ENCODE measurements at regions of chr7 and their contacts with region 1.

Region 1: GRCh38 chr7:95690367-95690947 is 81.9 kb upstream of the DYNC1I1 start:
- DNase-seq: no peak
- H3K4me3 ChIP-seq: peak overlapping the region in 1 of 4 experiments; percentile 41; a peak in 1 of 8 replicates
- H3K27ac ChIP-seq: no peak overlapping the region
- H3K4me1 ChIP-seq: no peaks in the 10 kb centered on the region
- H3K27me3 ChIP-seq: no peaks in the 10 kb centered on the region
- CTCF ChIP-seq: peak in 2 of 3 experiments; percentile 42 to 53; a peak in 3 of 4 replicates
- EP300 ChIP-seq: no peak
- POLR2A ChIP-seq: no peak
- RAD21 ChIP-seq: peak; percentile 48

Region 2: GRCh38 chr7:95476904-95477594 is 213.4 kb before region 1 on chr7:
- CTCF ChIA-PET with region 1: interaction called, 25 read pairs
- POLR2A ChIA-PET with region 1: no interaction called
- DNase-seq: no peak
- H3K4me3 ChIP-seq: no peak overlapping the region
- H3K27ac ChIP-seq: no peak overlapping the region
- H3K4me1 ChIP-seq: no peaks in the 10 kb centered on the region
- H3K27me3 ChIP-seq: no peaks in the 10 kb centered on the region
- CTCF ChIP-seq: peak in 2 of 3 experiments; percentile 70 to 71; a peak in 3 of 4 replicates
- EP300 ChIP-seq: no peak
- POLR2A ChIP-seq: no peak
- RAD21 ChIP-seq: peak; percentile 92 to 94

Region 3: GRCh38 chr7:95511716-95512260 is 178.7 kb before region 1 on chr7:
- CTCF ChIA-PET with region 1: interaction called, 256 read pairs
- POLR2A ChIA-PET with region 1: interaction called, 3 read pairs
- DNase-seq: peak in 1 of 2 experiments; percentile 73
- H3K4me3 ChIP-seq: no peak overlapping the region
- H3K27ac ChIP-seq: no peak overlapping the region
- H3K4me1 ChIP-seq: peaks cover 0 to 4% (median 0%) of the 10 kb centered on the region in 4 experiments; a peak in 1 of 7 replicates
- H3K27me3 ChIP-seq: no peaks in the 10 kb centered on the region
- CTCF ChIP-seq: peak; percentile 8 to 87 (median 74)
- EP300 ChIP-seq: no peak
- POLR2A ChIP-seq: no peak
- RAD21 ChIP-seq: peak; percentile 74 to 77

Region 4: DNA sequence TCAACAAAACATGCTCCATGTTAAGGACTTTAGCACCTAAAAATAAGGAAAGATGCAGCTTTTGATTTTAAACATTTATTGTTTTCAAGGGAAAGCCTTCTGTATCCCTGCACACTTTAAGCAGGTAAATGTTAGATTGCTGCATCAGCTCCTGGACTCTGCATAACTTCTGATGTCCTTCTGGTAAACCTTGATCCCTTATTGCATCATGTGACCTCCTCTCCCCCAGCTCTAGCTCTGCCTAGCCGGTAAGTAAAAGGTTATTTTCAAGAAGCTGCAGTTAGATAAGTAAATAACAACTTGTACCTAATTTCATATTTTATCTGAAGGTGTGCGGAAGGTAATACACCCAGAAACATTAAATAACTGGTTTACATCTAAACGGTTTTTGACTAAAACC is 131.6 kb before region 1 on chr7:
- CTCF ChIA-PET with region 1: interaction called, 16 read pairs
- POLR2A ChIA-PET with region 1: no interaction called
- DNase-seq: no peak
- H3K4me3 ChIP-seq: no peak overlapping the region
- H3K27ac ChIP-seq: no peak overlapping the region
- H3K4me1 ChIP-seq: no peaks in the 10 kb centered on the region
- H3K27me3 ChIP-seq: peaks cover 0 to 2% (median 0%) of the 10 kb centered on the region in 4 experiments; a peak in 1 of 7 replicates
- CTCF ChIP-seq: no peak
- EP300 ChIP-seq: no peak
- POLR2A ChIP-seq: no peak
- RAD21 ChIP-seq: no peak

Region 5: GRCh38 chr7:95649546-95649945 is 40.9 kb before region 1 on chr7:
- CTCF ChIA-PET with region 1: interaction called, 23 read pairs
- POLR2A ChIA-PET with region 1: no interaction called
- DNase-seq: no peak
- H3K4me3 ChIP-seq: no peak overlapping the region
- H3K27ac ChIP-seq: no peak overlapping the region
- H3K4me1 ChIP-seq: no peaks in the 10 kb centered on the region
- H3K27me3 ChIP-seq: peaks cover 0 to 1% (median 0%) of the 10 kb centered on the region in 4 experiments; a peak in 1 of 7 replicates
- CTCF ChIP-seq: no peak
- EP300 ChIP-seq: no peak
- POLR2A ChIP-seq: no peak
- RAD21 ChIP-seq: no peak

Region 6: GRCh38 chr7:95766657-95767056 is 76.2 kb after region 1 on chr7:
- CTCF ChIA-PET with region 1: no interaction called
- POLR2A ChIA-PET with region 1: no interaction called
- DNase-seq: no peak
- H3K4me3 ChIP-seq: no peak overlapping the region
- H3K27ac ChIP-seq: no peak overlapping the region
- H3K4me1 ChIP-seq: no peaks in the 10 kb centered on the region
- H3K27me3 ChIP-seq: 0 out of 7 replicates have a peak, but pooled peaks cover 0 to 2% (median 0%) of the 10 kb centered on the region in 4 experiments
- CTCF ChIP-seq: no peak
- EP300 ChIP-seq: no peak
- POLR2A ChIP-seq: no peak
- RAD21 ChIP-seq: no peak

Region 7: GRCh38 chr7:95871078-95871782 is 180.8 kb after region 1 on chr7:
- CTCF ChIA-PET with region 1: interaction called, 14 read pairs
- POLR2A ChIA-PET with region 1: no interaction called
- DNase-seq: peak in 1 of 2 experiments; percentile 52
- H3K4me3 ChIP-seq: no peak overlapping the region
- H3K27ac ChIP-seq: no peak overlapping the region
- H3K4me1 ChIP-seq: no peaks in the 10 kb centered on the region
- H3K27me3 ChIP-seq: no peaks in the 10 kb centered on the region; a peak in 1 of 7 replicates
- CTCF ChIP-seq: peak in 2 of 3 experiments; percentile 60 to 71; a peak in 3 of 4 replicates
- EP300 ChIP-seq: no peak
- POLR2A ChIP-seq: no peak
- RAD21 ChIP-seq: peak; percentile 86 to 92

Measured in H1 (cell line).